Dendritic cell treated with granulocyte-macrophage colony-stimulating factor and Interleukin-4, amounts not matched to agents 40 ng/mL and 50 ng/mL, for 4 days (primary cell): ENCODE measurements at regions of chr11 and their contacts with region 1.

Region 1: DNA sequence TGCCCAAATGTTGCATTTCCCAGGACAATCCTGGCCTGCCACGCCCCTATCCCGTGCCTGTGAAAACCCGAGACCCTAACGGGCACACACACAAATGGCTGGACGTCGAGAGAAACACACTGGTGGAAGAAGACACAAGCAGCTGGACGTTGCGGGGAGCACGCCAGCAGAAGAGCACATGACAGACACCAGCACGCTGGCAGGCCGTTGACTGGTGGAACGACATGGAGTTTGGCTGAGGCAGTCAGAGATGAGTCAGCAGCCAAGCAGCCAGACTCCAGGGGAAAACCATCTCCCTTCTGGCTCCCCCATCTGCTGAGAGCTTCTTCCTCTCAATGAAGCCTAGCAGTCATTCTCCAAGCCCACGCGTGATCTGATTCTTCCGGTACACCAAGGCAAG is 606.7 kb upstream of the LRRC4C start:
- H3K4me3 Mint-ChIP-seq: no peak overlapping the region
- H3K27ac Mint-ChIP-seq: no peak overlapping the region
- H3K4me1 Mint-ChIP-seq: no peaks in the 10 kb centered on the region
- H3K27me3 Mint-ChIP-seq: no peaks in the 10 kb centered on the region

Region 2: DNA sequence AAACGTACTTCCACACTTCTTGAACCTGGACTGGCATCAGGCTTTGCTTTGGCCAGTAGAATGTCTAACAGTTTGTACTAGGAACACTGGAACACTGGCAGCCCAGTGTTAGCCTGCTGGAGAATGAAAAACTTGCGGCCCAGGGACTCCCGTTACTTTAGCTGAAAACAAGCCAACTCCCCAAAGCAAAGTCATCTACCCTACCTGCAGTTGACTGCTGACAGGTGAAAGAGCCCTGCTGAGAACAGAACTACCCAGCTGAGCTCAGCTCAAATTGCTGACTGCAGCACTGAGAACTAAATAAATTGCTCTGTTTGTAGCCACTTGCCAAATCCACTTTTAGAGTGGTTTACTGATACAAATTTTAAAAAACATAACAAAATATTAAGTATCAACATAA is 949.1 kb before region 1 on chr11:
- intact Hi-C with region 1: no loop called
- H3K4me3 Mint-ChIP-seq: no peak overlapping the region
- H3K27ac Mint-ChIP-seq: no peak overlapping the region
- H3K4me1 Mint-ChIP-seq: no peaks in the 10 kb centered on the region
- H3K27me3 Mint-ChIP-seq: no peaks in the 10 kb centered on the region

Region 3: DNA sequence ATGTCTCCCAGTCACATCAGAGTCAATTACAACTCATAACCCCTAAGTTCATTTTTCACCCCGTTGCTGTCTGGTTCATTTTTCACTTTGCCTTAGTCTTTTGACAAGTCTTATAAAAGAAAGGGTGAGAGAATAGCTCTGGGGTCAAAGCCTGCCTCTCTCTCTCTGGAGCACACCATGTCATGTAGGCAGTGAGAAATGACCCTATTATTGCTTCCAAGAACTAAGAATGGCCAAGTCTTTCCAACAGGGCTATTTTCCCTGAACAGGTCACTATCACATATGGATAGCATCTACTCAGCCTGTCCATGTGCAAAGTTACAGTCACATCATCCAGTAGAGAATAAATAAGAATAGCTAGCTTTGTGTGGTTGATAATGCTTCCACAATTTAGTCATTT is 48.8 kb after region 1 on chr11:
- intact Hi-C with region 1: loop called (anchors 10 kb)
- H3K4me3 Mint-ChIP-seq: no peak overlapping the region
- H3K27ac Mint-ChIP-seq: no peak overlapping the region
- H3K4me1 Mint-ChIP-seq: no peaks in the 10 kb centered on the region
- H3K27me3 Mint-ChIP-seq: no peaks in the 10 kb centered on the region

Region 4: DNA sequence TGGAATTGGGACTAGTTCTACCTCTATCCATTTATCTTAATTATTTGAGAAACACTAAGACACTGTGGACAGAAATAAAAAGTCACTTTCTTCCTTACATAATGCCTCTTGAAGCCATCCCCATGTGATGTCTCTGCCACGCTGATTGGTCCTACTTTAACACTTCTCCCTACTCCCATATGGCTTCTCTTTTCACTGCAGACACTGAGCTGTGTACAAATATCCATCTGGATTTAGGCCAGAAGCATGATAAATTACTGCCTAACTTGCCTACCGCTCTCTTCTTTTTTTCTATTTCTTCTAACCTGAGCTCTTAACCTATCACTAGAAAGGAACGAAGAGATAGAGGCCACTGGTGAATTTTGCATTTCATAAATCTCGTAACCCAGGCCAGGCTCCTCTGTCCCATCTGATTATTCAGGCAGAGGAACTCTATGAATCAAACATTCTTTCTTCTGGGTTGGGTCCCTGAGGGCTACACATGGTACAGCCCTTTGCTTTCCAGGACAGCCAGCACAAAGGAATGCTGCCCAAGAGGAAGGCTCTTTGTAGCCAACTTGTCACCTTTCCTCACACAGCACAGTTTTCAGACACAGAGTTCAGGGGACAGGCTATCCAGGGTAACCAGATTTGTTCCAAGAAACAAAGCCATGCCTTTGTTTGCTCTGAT is 271.8 kb after region 1 on chr11:
- intact Hi-C with region 1: no loop called
- H3K4me3 Mint-ChIP-seq: no peak overlapping the region
- H3K27ac Mint-ChIP-seq: no peak overlapping the region
- H3K4me1 Mint-ChIP-seq: no peaks in the 10 kb centered on the region
- H3K27me3 Mint-ChIP-seq: no peaks in the 10 kb centered on the region